ENCODE measurements at regions of chr7 and their contacts with region 1.

Region 1: DNA sequence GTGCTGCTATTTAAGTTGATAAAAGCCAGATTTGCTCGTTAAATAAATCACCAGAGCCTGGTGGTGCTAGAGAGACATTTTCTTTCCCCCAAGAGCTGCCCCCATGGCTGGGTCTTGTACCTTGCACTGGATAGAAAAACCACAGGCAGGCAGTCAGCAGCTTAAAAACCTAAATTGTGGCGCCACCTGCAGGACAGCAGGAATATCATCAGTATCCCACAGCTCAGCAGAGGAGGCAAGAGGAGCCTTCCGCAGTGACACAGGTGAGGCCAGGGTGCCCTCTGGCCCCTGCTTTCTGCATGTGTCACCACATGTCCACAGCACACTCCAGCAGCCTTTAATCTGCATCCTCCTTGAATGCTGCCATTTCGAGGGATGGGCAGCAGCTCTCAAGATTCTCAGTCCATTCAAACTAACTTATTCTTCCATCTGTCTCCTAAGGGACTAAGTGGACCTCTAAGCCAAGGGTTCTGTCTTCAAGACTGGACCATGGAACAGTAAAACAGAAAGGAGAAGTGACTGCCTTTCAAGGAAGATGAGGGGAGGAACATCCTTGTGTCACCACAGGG is 4.5 kb upstream of the PLXNA4 start:
- DNase-seq: peak; percentile 63
- H3K4me3 Mint-ChIP-seq: no peak overlapping the region
- H3K27ac Mint-ChIP-seq: no peak overlapping the region
- H3K4me1 Mint-ChIP-seq: no peaks in the 10 kb centered on the region
- H3K27me3 Mint-ChIP-seq: peaks cover 42% of the 10 kb centered on the region

Region 2: GRCh38 chr7:131945313-131945911 is 635.4 kb before region 1 on chr7:
- intact Hi-C with region 1: loop called (anchors 10 kb)
- DNase-seq: peak; percentile 11
- H3K4me3 Mint-ChIP-seq: no peak overlapping the region
- H3K27ac Mint-ChIP-seq: no peak overlapping the region
- H3K4me1 Mint-ChIP-seq: peaks cover 4% of the 10 kb centered on the region
- H3K27me3 Mint-ChIP-seq: peaks cover 10% of the 10 kb centered on the region

Region 3: DNA sequence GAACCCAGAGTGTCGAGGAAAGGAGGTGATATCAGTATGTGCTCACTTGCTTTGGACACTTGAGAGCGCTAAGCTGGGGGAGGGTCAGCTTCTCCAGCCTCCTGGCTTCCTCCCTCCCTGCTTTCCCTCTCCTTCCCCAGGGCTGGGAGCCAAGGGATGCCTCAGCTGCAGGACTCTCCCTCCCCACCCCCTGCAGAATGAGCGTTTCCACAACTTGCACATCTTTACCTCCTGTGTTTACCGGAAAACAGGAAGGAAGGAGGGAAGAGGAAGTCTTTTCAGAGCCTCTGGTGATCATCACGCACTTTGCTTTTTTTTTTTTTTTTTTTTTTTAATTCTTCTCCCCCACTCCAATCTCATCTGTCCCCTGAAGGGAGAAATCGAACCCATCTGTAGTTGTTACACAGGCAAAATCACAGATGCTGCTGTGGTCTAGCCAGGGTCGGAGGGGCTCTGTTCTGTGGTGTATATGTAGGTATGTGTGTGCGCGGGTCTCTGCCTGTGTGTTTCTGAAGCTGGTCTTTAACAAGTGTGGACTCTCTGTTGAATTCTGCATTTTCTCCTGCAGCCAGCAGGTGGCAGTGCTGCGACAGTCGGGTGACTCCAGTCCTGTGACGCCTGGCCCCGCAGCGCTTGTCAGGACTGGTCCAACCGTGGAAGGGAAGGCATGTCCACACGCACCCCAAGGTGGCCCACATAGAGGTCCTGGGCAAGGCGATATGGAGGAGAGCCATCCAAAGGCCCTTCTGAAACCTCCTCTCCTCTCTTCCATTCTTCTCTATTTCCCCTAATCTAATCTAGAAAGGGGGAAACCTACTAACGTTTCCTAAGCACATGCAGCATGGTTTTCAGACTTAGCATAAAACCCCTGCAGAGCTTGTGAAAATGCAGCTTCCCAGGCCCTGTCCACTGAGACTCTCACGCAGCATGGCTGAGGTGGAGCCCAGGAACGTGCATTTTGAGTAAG is 262.2 kb before region 1 on chr7:
- intact Hi-C with region 1: loop called (anchors 1 kb)
- DNase-seq: peak; percentile 71
- H3K4me3 Mint-ChIP-seq: no peak overlapping the region
- H3K27ac Mint-ChIP-seq: no peak overlapping the region
- H3K4me1 Mint-ChIP-seq: peaks cover 14% of the 10 kb centered on the region
- H3K27me3 Mint-ChIP-seq: peaks cover 29% of the 10 kb centered on the region

Region 4: GRCh38 chr7:132394283-132395198 is 186.3 kb before region 1 on chr7:
- intact Hi-C with region 1: loop called (anchors 1 kb)
- DNase-seq: no peak
- H3K4me3 Mint-ChIP-seq: no peak overlapping the region
- H3K27ac Mint-ChIP-seq: no peak overlapping the region
- H3K4me1 Mint-ChIP-seq: peaks cover 20% of the 10 kb centered on the region
- H3K27me3 Mint-ChIP-seq: peaks cover 17% of the 10 kb centered on the region

Region 5: GRCh38 chr7:133434055-133434865 is 853.5 kb after region 1 on chr7:
- intact Hi-C with region 1: loop called (anchors 10 kb)
- DNase-seq: no peak
- H3K4me3 Mint-ChIP-seq: no peak overlapping the region
- H3K27ac Mint-ChIP-seq: no peak overlapping the region
- H3K4me1 Mint-ChIP-seq: peaks cover 17% of the 10 kb centered on the region
- H3K27me3 Mint-ChIP-seq: no peaks in the 10 kb centered on the region

Measured in activated T-helper 2 cell treated with anti-CD3 and anti-CD28 coated beads, Interferon-gamma antibody, Interleukin-2, Interleukin-4, amounts not matched to agents 10 μg/mL and 5 μg/mL and 100 μg/mL, durations not matched to agents 14 hours and 24 hours and 36 hours (primary cell).